AG04450 (cell line): ENCODE measurements at regions of chr14 and their contacts with region 1.

Region 1: GRCh38 chr14:22556990-22557623 is 31.9 kb downstream of the DAD1 start:
- DNase-seq: peak; percentile 33
- H3K4me3 ChIP-seq: peak overlapping the region; percentile 43
- H3K27ac ChIP-seq: peak overlapping the region; percentile 57
- H3K27me3 ChIP-seq: no peaks in the 10 kb centered on the region
- CTCF ChIP-seq: peak; percentile 92

Region 2: GRCh38 chr14:22448905-22449599 is 108.1 kb before region 1 on chr14:
- CTCF ChIA-PET with region 1: no interaction called
- POLR2A ChIA-PET with region 1: no interaction called
- DNase-seq: no peak
- H3K4me3 ChIP-seq: no peak overlapping the region
- H3K27ac ChIP-seq: no peak overlapping the region
- H3K27me3 ChIP-seq: peaks cover 38% of the 10 kb centered on the region
- CTCF ChIP-seq: no peak

Region 3: DNA sequence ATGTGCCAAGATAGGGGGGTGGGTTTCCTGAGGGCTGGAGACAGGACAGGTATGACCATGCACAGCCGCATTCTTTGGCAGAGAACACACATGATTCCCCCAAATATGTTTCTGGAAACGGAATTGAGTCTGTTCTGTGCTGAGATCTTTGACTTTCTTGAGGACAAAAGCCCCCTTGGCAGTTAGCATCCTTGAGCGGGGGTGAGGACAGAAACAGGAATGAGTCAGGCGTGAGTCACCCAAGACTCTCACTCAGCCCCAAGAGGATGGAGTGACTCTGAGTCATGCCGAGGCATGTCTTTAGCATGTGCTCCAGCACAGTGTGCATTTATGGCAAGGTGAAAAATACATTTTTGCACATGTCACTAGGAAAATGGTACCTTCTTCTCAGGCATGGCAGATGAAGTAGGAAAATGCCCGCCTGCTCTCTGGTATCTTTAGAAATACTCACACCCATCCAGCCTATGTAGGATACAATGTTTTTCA is 20.2 kb before region 1 on chr14:
- CTCF ChIA-PET with region 1: interaction called, 59 read pairs
- POLR2A ChIA-PET with region 1: no interaction called
- DNase-seq: peak; percentile 81
- H3K4me3 ChIP-seq: no peak overlapping the region; the same call in 1 of the 2 replicates
- H3K27ac ChIP-seq: peak overlapping the region; percentile 85
- H3K27me3 ChIP-seq: no peaks in the 10 kb centered on the region
- CTCF ChIP-seq: no peak

Region 4: GRCh38 chr14:22685467-22685866 is 128.4 kb after region 1 on chr14:
- CTCF ChIA-PET with region 1: interaction called, 11 read pairs
- POLR2A ChIA-PET with region 1: no interaction called
- DNase-seq: no peak
- H3K4me3 ChIP-seq: no peak overlapping the region
- H3K27ac ChIP-seq: no peak overlapping the region
- H3K27me3 ChIP-seq: peaks cover 22% of the 10 kb centered on the region
- CTCF ChIP-seq: no peak

Region 5: GRCh38 chr14:22735096-22735495 is 178.0 kb after region 1 on chr14:
- CTCF ChIA-PET with region 1: no interaction called
- POLR2A ChIA-PET with region 1: no interaction called
- DNase-seq: no peak
- H3K4me3 ChIP-seq: no peak overlapping the region
- H3K27ac ChIP-seq: no peak overlapping the region
- H3K27me3 ChIP-seq: peaks cover 7% of the 10 kb centered on the region
- CTCF ChIP-seq: no peak

Region 6: DNA sequence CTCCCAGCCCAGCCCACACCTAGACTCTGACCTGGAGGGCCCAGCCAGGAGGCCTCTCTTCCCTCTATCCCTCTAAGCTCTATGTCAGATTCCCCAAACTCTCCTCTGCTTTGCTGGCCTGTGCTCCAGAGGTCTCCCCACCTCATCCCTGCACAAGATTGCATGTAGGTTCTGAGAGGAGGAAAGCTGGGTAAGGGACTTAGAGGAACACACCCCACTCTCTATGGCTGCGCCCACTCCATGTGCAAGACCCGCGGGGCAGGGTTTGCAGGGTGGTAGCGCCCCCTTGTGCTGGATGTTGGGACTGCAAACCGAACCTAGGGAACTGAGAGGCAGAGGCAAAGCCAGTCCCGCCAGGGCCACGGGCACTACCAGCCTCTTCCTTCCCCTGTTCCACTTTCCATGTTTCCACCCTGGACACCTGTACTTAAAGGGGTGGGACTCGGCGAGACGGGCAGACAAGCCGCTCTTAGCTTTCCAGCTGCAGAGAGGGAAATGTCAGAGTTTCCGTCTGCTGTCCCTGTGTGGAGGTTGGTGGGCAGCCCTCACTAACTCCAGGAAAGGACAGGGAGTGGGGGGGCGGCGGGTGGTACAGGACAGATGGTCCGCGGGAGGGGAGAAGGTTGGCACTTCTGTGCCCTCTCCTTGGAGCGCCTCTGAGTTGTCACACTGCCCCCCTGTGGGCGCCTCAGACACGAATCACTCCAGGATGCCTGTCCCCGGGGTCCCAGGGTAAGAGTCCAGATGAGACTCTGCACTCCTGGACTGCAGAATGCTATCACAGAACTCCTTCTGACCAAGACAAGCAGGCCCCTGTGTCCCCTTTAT is 296.0 kb after region 1 on chr14:
- CTCF ChIA-PET with region 1: interaction called, 94 read pairs
- POLR2A ChIA-PET with region 1: interaction called, 7 read pairs
- DNase-seq: no peak
- H3K4me3 ChIP-seq: peak overlapping the region; percentile 56
- H3K27ac ChIP-seq: peak overlapping the region; percentile 52
- H3K27me3 ChIP-seq: no peaks in the 10 kb centered on the region
- CTCF ChIP-seq: peak; percentile 91

Region 7: DNA sequence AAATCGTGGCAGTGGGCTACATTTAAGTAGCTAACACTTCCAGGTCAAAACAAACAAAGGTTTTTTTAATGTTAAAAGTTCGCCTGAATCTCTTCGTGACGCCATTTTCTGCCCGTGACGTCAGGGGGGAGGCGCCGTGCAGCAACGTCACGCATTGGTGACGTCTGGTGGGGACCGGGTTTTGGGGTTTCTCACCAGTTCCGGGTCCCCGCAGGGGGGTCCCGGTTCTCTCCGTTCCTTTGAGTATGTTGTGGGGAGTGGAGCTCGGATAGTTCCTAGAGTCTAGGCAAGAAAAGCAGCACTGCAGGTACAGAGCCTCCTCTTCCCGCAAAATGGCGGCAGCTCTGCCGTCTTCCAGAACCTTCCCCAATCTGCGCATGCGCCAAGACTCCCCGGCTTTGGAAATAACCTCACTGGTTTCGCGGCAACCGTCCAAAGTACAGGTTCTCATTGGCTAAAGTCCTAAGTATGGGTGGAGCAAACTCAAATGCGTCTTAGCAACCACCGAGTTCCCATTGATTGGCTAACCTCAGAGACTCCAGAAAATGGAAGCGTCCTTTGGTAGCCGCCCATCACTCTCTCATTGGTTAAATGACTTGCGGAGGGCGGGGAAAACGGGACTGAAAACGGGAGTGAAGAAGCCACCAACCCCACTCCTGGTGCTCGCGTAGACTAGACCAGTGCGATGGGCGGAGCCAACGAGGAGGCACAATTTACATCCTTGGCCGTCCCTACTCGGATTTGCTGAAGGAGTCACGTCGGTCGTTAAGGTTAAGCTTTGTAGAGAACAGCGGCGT is 361.9 kb after region 1 on chr14 and contains the start of gene RBM23:
- CTCF ChIA-PET with region 1: interaction called, 11 read pairs
- POLR2A ChIA-PET with region 1: no interaction called
- DNase-seq: peak; percentile 100
- H3K4me3 ChIP-seq: peak within 1 kb of the TSS; percentile 95
- H3K27ac ChIP-seq: peak within 1 kb of the TSS; percentile 99
- H3K27me3 ChIP-seq: no peaks in the 10 kb centered on the region
- CTCF ChIP-seq: no peak
- polyA plus RNA-seq, gene RBM23: 46.2 and 47.2 TPM in 2 replicates

Region 8: DNA sequence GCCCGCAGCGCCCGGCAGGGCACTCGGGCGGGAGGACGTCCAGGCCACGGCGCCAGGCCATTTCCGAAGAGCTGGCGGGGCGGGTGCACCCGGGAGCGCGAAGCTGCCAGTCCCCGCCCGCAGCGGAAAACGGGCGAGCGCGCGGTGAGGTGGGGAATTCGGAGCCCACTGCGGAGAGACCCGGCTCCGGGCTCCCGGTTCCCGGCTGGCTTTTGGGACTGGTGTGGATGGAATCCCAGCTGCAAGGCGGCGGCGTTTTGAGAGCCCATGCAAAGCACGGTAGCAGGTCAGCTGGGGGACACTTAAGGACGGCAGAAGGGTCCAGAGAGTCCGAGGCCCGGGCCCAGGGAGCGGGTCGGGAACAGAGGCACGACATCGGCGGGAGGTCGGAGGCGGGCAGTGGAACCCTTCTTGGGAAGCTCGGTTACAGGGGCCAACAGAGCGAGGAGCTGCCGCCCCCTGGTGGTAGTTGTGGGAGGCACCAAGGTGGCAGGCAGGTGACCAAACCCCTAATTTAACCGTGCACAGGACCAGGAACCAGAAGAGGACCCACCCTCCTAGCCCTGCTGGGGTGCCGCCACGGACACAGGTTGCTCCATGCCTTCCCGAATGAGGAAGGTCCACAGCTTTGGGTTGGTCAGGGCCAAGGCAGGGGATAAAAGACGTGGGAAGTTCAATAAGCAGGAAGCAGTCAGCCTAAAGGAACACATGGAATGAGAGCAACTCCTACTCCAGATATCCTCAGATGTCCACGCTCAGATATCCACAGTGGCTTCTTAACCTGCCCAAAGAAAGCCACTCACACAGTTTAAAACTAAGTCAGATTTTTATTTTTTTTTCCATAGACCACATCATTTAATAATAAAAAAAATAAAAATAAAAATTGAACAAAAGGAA is 500.9 kb after region 1 on chr14:
- CTCF ChIA-PET with region 1: interaction called, 10 read pairs
- POLR2A ChIA-PET with region 1: interaction called, 3 read pairs
- DNase-seq: peak; percentile 45
- H3K4me3 ChIP-seq: peak overlapping the region; percentile 61
- H3K27ac ChIP-seq: peak overlapping the region; percentile 52
- H3K27me3 ChIP-seq: no peaks in the 10 kb centered on the region
- CTCF ChIP-seq: peak; percentile 96